ENCODE measurements at regions of chr19 and their contacts with region 1.

Region 1: GRCh38 chr19:57103573-57104277 is 16.1 kb upstream of the USP29 start:
- DNase-seq: peak; percentile 49
- ATAC-seq: peak; percentile 79 to 84

Region 2: GRCh38 chr19:56748378-56748777 is 355.3 kb before region 1 on chr19:
- intact Hi-C with region 1: loop called in 1 of 2 experiments (anchors 10 kb)
- DNase-seq: no peak
- ATAC-seq: peak in 1 of 2 donors; percentile 42

Region 3: GRCh38 chr19:57152921-57153320 is 49.2 kb after region 1 on chr19:
- intact Hi-C with region 1: no loop called
- DNase-seq: no peak
- ATAC-seq: no peak

Region 4: GRCh38 chr19:57903618-57904184 is 800.0 kb after region 1 on chr19:
- intact Hi-C with region 1: loop called in 1 of 2 experiments (anchors 10 kb)
- DNase-seq: no peak
- ATAC-seq: no peak